Caco-2 (cell line): ENCODE measurements at regions of chr10 and their contacts with region 1.

Region 1: GRCh38 chr10:119207367-119207668 is at the start of gene GRK5:
- DNase-seq: peak; percentile 93 to 96
- H3K4me3 ChIP-seq: peak within 1 kb of the TSS; percentile 75
- H3K4me3 Mint-ChIP-seq: peak within 1 kb of the TSS; percentile 81
- H3K27ac Mint-ChIP-seq: peak within 1 kb of the TSS; percentile 84
- H3K4me1 ChIP-seq: peaks cover 16% of the 10 kb centered on the region
- H3K4me1 Mint-ChIP-seq: peaks cover 17% of the 10 kb centered on the region
- H3K27me3 ChIP-seq: no peaks in the 10 kb centered on the region
- H3K27me3 Mint-ChIP-seq: no peaks in the 10 kb centered on the region
- CTCF ChIP-seq: no peak
- total RNA-seq, gene GRK5: 7.7 and 8.9 TPM in 2 replicates

Region 2: DNA sequence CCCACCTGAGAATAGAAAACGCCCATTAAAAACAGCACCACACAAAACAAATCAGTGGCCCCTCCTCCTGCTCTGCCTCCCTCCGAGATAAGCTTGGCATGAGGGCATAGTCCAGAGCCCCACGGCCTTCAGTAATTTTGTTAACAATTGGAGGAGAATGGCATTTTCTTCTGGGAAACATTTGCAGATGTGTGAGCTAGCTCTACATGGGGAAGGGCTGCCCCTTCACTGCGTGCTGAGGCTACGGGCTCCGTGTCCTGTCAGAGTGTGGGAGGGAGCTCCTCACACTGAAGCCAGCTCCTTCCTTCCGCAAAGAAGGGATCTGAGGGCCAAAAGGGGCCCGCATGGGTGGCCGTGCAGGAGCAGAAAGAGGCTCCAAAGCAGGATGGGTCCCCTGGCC is 15.2 kb after region 1 on chr10:
- CTCF ChIA-PET with region 1: interaction called, 14 read pairs
- POLR2A ChIA-PET with region 1: interaction called, 7 read pairs
- intact Hi-C with region 1: no loop called
- DNase-seq: peak; percentile 55 to 64
- H3K4me3 ChIP-seq: no peak overlapping the region
- H3K4me3 Mint-ChIP-seq: peak overlapping the region; percentile 56
- H3K27ac Mint-ChIP-seq: peak overlapping the region; percentile 77
- H3K4me1 ChIP-seq: peaks cover 33% of the 10 kb centered on the region
- H3K4me1 Mint-ChIP-seq: peaks cover 20% of the 10 kb centered on the region
- H3K27me3 ChIP-seq: no peaks in the 10 kb centered on the region
- H3K27me3 Mint-ChIP-seq: no peaks in the 10 kb centered on the region
- CTCF ChIP-seq: no peak

Region 3: GRCh38 chr10:119243488-119243887 is 36.2 kb after region 1 on chr10:
- CTCF ChIA-PET with region 1: interaction called, 7 read pairs
- POLR2A ChIA-PET with region 1: interaction called, 5 read pairs
- intact Hi-C with region 1: loop called (anchors 1 kb)
- DNase-seq: peak; percentile 59 to 68
- H3K4me3 ChIP-seq: peak overlapping the region; percentile 15
- H3K4me3 Mint-ChIP-seq: peak overlapping the region; percentile 44
- H3K27ac Mint-ChIP-seq: peak overlapping the region; percentile 34
- H3K4me1 ChIP-seq: peaks cover 40% of the 10 kb centered on the region
- H3K4me1 Mint-ChIP-seq: peaks cover 30% of the 10 kb centered on the region
- H3K27me3 ChIP-seq: no peaks in the 10 kb centered on the region
- H3K27me3 Mint-ChIP-seq: no peaks in the 10 kb centered on the region
- CTCF ChIP-seq: no peak

Region 4: DNA sequence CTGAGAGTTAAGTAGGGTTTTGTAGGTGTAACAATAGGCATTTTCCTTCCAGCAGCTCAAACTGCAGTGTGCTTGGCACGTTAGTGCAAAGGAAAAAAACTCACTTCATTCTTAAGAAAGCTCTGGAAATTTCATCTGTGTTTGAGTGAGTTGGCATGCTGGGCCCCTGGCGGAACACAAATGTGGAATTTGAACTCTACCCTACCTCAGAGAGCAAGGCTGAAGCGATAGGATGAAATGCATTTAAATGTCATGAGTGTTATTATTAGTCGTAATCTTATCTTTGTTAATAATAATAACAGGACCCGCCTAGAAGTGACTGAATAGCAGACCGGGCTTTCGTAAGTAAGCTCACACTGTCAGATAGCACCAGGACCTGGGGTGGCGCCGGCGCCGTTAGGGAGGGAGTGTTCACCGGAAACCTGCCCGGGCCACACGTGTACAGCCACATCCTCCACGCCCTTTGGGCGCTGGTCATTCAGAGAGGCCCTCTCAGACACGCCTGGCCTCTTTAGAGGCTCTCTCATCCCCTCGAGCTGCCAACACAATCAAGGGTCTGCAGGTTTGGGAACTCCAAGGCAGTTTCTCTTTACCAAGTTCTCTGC is 63.5 kb after region 1 on chr10:
- CTCF ChIA-PET with region 1: interaction called, 29 read pairs
- POLR2A ChIA-PET with region 1: interaction called, 11 read pairs
- intact Hi-C with region 1: loop called (anchors 1 kb)
- DNase-seq: peak; percentile 68 to 87
- H3K4me3 ChIP-seq: no peak overlapping the region
- H3K4me3 Mint-ChIP-seq: peak overlapping the region; percentile 71
- H3K27ac Mint-ChIP-seq: peak overlapping the region; percentile 88
- H3K4me1 ChIP-seq: peaks cover 29% of the 10 kb centered on the region
- H3K4me1 Mint-ChIP-seq: peaks cover 17% of the 10 kb centered on the region
- H3K27me3 ChIP-seq: no peaks in the 10 kb centered on the region
- H3K27me3 Mint-ChIP-seq: no peaks in the 10 kb centered on the region
- CTCF ChIP-seq: no peak

Region 5: GRCh38 chr10:119315128-119316001 is 108.0 kb after region 1 on chr10:
- CTCF ChIA-PET with region 1: no interaction called
- POLR2A ChIA-PET with region 1: interaction called, 3 read pairs
- intact Hi-C with region 1: loop called (anchors 5 kb)
- DNase-seq: peak; percentile 56 to 66
- H3K4me3 ChIP-seq: no peak overlapping the region
- H3K4me3 Mint-ChIP-seq: no peak overlapping the region
- H3K27ac Mint-ChIP-seq: peak overlapping the region; percentile 97
- H3K4me1 ChIP-seq: peaks cover 51% of the 10 kb centered on the region
- H3K4me1 Mint-ChIP-seq: peaks cover 48% of the 10 kb centered on the region
- H3K27me3 ChIP-seq: no peaks in the 10 kb centered on the region
- H3K27me3 Mint-ChIP-seq: no peaks in the 10 kb centered on the region
- CTCF ChIP-seq: no peak

Region 6: GRCh38 chr10:119445311-119445934 is 238.1 kb after region 1 on chr10:
- CTCF ChIA-PET with region 1: interaction called, 20 read pairs
- POLR2A ChIA-PET with region 1: no interaction called
- intact Hi-C with region 1: no loop called
- DNase-seq: peak; percentile 84 to 90
- H3K4me3 ChIP-seq: no peak overlapping the region
- H3K4me3 Mint-ChIP-seq: no peak overlapping the region
- H3K27ac Mint-ChIP-seq: no peak overlapping the region
- H3K4me1 ChIP-seq: no peaks in the 10 kb centered on the region
- H3K4me1 Mint-ChIP-seq: no peaks in the 10 kb centered on the region
- H3K27me3 ChIP-seq: no peaks in the 10 kb centered on the region
- H3K27me3 Mint-ChIP-seq: no peaks in the 10 kb centered on the region
- CTCF ChIP-seq: peak; percentile 91 to 98

Region 7: DNA sequence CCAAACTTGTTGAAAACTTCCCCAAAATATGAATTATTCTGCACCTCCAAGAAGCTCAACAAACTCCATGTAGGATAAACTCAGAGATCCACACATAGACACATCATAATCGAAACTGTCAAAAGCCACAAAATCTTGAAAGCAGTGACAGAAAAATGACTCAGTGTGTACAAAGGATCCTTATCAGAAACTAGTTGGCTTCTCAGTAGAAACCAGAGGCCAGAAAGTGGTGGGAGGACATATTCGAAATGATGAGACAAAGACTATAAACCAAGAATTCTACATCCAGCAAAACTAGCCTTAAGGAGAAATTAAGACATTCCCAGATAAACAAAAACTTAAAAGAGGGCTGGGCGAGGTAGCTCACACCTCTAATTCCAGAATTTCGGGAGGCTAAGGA is 626.9 kb after region 1 on chr10:
- CTCF ChIA-PET with region 1: no interaction called
- POLR2A ChIA-PET with region 1: no interaction called
- intact Hi-C with region 1: no loop called
- DNase-seq: no peak
- H3K4me3 ChIP-seq: no peak overlapping the region
- H3K4me3 Mint-ChIP-seq: no peak overlapping the region
- H3K27ac Mint-ChIP-seq: peak overlapping the region; percentile 62
- H3K4me1 ChIP-seq: no peaks in the 10 kb centered on the region; the same call in 1 of the 2 replicates
- H3K4me1 Mint-ChIP-seq: peaks cover 19% of the 10 kb centered on the region
- H3K27me3 ChIP-seq: no peaks in the 10 kb centered on the region
- H3K27me3 Mint-ChIP-seq: no peaks in the 10 kb centered on the region
- CTCF ChIP-seq: no peak